HepG2 (cell line): ENCODE measurements at regions of chr9 and their contacts with region 1.

Region 1: DNA sequence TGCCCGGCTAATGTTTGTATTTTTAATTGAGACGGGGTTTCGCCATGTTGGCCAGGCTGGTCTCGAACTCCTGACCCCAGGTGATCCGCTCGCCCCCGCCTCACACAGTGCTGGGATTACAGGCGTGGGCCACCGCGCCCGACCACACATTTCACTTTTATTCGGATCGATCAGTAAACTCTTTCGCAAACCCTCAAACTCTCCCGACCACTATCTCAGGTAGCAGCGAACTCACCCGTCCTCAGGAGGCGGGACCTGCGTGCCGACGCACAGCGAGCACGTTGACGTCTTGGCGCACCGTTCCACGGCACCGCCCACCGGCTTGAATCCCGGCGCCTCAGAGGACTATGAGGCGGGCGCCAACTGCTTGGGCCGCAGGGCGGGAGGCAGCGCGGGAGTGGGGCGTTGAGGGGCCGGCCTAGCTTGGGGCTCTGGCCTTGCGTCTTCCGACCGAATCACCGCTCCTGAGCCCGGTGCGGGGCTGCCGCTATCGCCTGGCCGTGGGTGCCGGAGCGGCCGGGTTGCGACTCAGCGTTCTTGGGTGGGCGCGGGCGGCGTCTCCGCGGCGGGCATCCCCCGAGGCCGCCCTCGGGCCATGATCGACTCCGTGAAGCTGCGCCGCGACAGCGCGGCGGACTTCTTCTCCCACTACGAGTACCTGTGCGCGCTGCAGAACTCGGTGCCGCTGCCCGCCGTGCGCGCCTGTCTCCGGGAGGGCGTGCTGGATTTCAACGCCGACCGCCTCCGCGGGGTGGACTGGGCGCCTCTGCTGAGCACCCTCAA is at the start of gene CEP78:
- DNase-seq: peak; percentile 89
- ATAC-seq: peak; percentile 96
- H3K4me3 ChIP-seq: peak within 1 kb of the TSS; percentile 80 to 96 (median 87)
- H3K27ac ChIP-seq: peak within 1 kb of the TSS; percentile 80
- H3K4me1 ChIP-seq: peaks cover 49% of the 10 kb centered on the region
- H3K27me3 ChIP-seq: no peaks in the 10 kb centered on the region
- CTCF ChIP-seq: no peak
- EP300 ChIP-seq: no peak
- POLR2A ChIP-seq: peak in 1 of 2 experiments; percentile 75
- RAD21 ChIP-seq: no peak
- total RNA-seq, gene CEP78: 30.8 and 38.3 TPM in 2 replicates

Region 2: DNA sequence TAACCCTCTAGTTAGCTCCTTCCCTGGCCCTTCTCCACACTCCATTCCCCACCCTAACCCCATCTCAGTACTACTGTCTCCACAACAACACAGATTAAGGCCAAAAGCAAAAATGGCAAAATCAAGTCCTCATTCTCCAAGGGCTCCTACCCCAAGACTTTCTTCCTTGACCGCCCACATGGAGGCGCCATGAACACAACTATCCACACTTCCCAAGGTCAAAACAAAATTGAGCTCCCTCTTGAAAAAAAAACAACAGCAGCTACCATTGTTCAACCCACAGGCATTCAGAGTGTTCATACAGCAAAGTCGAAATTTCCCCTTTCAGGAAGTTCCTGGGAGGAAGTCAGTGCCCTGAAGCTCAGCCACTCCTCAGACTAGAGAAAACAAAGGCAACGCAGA is 258.7 kb before region 1 on chr9:
- CTCF ChIA-PET with region 1: no interaction called
- POLR2A ChIA-PET with region 1: no interaction called
- in situ Hi-C with region 1: no loop called
- intact Hi-C with region 1: loop called (anchors 2 kb)
- DNase-seq: peak; percentile 79
- ATAC-seq: peak; percentile 85
- H3K4me3 ChIP-seq: no peak overlapping the region
- H3K27ac ChIP-seq: peak overlapping the region; percentile 19
- H3K4me1 ChIP-seq: peaks cover 32% of the 10 kb centered on the region
- H3K27me3 ChIP-seq: no peaks in the 10 kb centered on the region
- CTCF ChIP-seq: peak; percentile 76
- EP300 ChIP-seq: no peak; a peak in 1 of 4 replicates
- POLR2A ChIP-seq: no peak
- RAD21 ChIP-seq: peak; percentile 75

Region 3: GRCh38 chr9:78158286-78158685 is 77.7 kb before region 1 on chr9:
- CTCF ChIA-PET with region 1: no interaction called
- POLR2A ChIA-PET with region 1: no interaction called
- in situ Hi-C with region 1: no loop called
- intact Hi-C with region 1: no loop called
- DNase-seq: no peak
- ATAC-seq: no peak
- H3K4me3 ChIP-seq: no peak overlapping the region
- H3K27ac ChIP-seq: no peak overlapping the region
- H3K4me1 ChIP-seq: no peaks in the 10 kb centered on the region
- H3K27me3 ChIP-seq: no peaks in the 10 kb centered on the region
- CTCF ChIP-seq: no peak
- EP300 ChIP-seq: no peak
- POLR2A ChIP-seq: no peak
- RAD21 ChIP-seq: no peak

Region 4: DNA sequence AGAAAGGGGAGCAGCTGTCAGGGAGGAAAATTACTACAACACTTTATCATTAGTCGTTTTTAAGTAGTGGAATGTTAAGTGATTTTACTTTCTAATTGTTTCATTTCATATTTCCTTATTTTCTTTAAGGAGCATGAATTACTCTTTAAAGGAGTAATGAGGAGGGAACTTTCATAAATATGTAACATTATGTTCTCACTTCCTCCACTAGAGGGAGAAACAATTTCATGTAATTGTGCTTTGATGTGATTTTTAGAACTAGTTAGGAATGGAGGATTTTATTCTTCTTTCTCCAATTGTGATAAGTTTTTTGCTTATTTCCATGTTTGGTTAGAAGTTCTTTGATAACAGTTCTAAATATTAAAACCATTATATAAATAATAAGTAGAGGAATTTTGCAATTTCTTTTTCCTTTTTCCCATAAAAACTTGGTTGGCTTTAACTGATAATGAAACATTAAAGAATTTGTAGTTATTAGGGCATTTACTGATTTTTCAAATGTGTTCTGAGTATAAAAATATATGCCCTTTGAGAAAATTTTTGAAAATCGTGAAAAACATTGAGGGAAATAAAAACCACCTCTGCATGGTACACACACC is 25.6 kb after region 1 on chr9:
- CTCF ChIA-PET with region 1: no interaction called
- POLR2A ChIA-PET with region 1: no interaction called
- in situ Hi-C with region 1: no loop called
- intact Hi-C with region 1: no loop called
- DNase-seq: peak; percentile 23
- ATAC-seq: no peak
- H3K4me3 ChIP-seq: no peak overlapping the region
- H3K27ac ChIP-seq: no peak overlapping the region
- H3K4me1 ChIP-seq: no peaks in the 10 kb centered on the region
- H3K27me3 ChIP-seq: no peaks in the 10 kb centered on the region
- CTCF ChIP-seq: peak; percentile 66
- EP300 ChIP-seq: no peak
- POLR2A ChIP-seq: no peak
- RAD21 ChIP-seq: peak; percentile 20; the same call in 1 of the 2 replicates